CD8-positive, alpha-beta T cell (primary cell): ENCODE measurements at regions of chr2 and their contacts with region 1.

Region 1: DNA sequence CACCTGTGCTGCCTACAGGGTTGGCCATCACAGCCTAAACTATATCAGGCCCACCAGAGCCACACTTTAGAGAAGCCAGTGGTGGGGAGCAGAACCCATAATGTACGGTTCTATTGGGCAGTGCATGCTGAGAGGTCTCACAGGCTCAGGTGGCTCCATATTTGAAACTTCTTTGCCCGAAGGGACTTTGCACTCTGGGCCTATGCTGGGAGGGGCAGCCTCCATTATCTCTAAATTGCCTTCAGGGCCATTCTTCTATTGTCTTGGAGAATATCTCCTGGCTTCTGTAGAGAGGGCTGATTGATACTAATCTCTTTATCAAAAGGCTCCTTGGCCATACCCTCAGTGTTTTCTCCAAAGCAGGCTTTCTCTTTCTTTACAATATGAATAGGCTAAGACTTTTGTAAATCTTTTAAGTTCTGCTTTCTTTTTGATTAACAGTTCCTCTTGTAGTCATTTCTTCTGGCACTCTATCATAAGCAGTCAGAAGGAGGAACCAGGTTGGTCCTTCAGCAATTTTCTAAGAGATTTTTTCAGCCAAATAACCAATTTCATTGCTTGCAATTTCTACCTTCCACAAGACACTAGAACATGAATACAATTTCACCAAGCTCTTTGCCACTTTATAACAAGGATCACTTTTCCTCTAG is 44.5 kb downstream of the RPE start:
- DNase-seq: no peak
- ATAC-seq: no peak
- H3K4me3 ChIP-seq: no peak overlapping the region
- H3K4me3 Mint-ChIP-seq: no peak overlapping the region
- H3K27ac ChIP-seq: no peak overlapping the region
- H3K27ac Mint-ChIP-seq: no peak overlapping the region
- H3K4me1 ChIP-seq: no peaks in the 10 kb centered on the region
- H3K4me1 Mint-ChIP-seq: no peaks in the 10 kb centered on the region
- H3K27me3 ChIP-seq: no peaks in the 10 kb centered on the region
- H3K27me3 Mint-ChIP-seq: no peaks in the 10 kb centered on the region
- CTCF ChIP-seq: no peak

Region 2: DNA sequence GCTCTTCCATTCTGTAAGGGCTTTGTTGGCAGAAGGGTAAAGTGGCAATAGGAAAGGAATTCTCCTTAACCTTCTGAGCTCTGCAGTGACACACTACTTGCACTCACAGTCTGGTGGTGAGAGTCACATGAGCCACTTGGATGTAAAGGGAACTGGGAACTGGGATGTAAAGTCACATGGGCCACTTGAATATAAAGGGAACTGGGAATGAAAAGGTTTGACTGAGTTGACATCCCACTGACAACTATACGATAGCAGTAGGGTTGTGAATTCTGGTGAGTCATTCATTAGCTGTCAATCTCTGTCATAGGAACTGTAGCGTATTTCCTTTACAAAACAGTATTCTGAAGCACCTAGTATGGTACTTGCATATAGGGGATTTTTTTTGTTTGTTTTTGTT is 39.1 kb before region 1 on chr2:
- CTCF ChIA-PET with region 1: no interaction called
- POLR2A ChIA-PET with region 1: no interaction called
- intact Hi-C with region 1: loop called in 1 of 2 experiments (anchors 5 kb)
- DNase-seq: peak in 1 of 9 experiments; percentile 12
- ATAC-seq: no peak
- H3K4me3 ChIP-seq: no peak overlapping the region
- H3K4me3 Mint-ChIP-seq: no peak overlapping the region
- H3K27ac ChIP-seq: no peak overlapping the region
- H3K27ac Mint-ChIP-seq: no peak overlapping the region
- H3K4me1 ChIP-seq: peaks cover 41% of the 10 kb centered on the region
- H3K4me1 Mint-ChIP-seq: peaks cover 79% of the 10 kb centered on the region
- H3K27me3 ChIP-seq: no peaks in the 10 kb centered on the region
- H3K27me3 Mint-ChIP-seq: no peaks in the 10 kb centered on the region
- CTCF ChIP-seq: no peak